K562 (cell line): ENCODE measurements at regions of chr3 and their contacts with region 1.

Region 1: GRCh38 chr3:185572183-185572582 is 13.9 kb upstream of the SENP2 start:
- DNase-seq: peak; percentile 50 to 74 (median 64)
- ATAC-seq: peak; percentile 75
- H3K4me3 ChIP-seq: no peak overlapping the region
- H3K27ac ChIP-seq: peak overlapping the region; percentile 57; the same call in 2 of the 3 replicates
- H3K4me1 ChIP-seq: peaks cover 0 to 3% of the 10 kb centered on the region in 2 experiments; a peak in 2 of 5 replicates
- H3K27me3 ChIP-seq: no peaks in the 10 kb centered on the region
- CTCF ChIP-seq: no peak
- EP300 ChIP-seq: peak; percentile 47; the same call in 1 of the 2 replicates
- POLR2A ChIP-seq: no peak
- RAD21 ChIP-seq: no peak

Region 2: GRCh38 chr3:185290266-185290665 is 281.9 kb before region 1 on chr3:
- CTCF ChIA-PET with region 1: no interaction called
- POLR2A ChIA-PET with region 1: no interaction called
- in situ Hi-C with region 1: no loop called
- intact Hi-C with region 1: no loop called
- DNase-seq: peak in 2 of 4 experiments; percentile 20 to 42
- ATAC-seq: peak; percentile 77
- H3K4me3 ChIP-seq: no peak overlapping the region
- H3K27ac ChIP-seq: peak overlapping the region; percentile 21; the same call in 1 of the 3 replicates
- H3K4me1 ChIP-seq: peaks cover 1 to 4% of the 10 kb centered on the region in 2 experiments; a peak in 3 of 5 replicates
- H3K27me3 ChIP-seq: no peaks in the 10 kb centered on the region
- CTCF ChIP-seq: peak in 2 of 3 experiments; percentile 7 to 43; a peak in 3 of 6 replicates
- EP300 ChIP-seq: no peak
- POLR2A ChIP-seq: no peak
- RAD21 ChIP-seq: peak in 1 of 2 experiments; percentile 38; a peak in 1 of 4 replicates

Region 3: GRCh38 chr3:185406121-185406620 is 166.0 kb before region 1 on chr3:
- CTCF ChIA-PET with region 1: no interaction called
- POLR2A ChIA-PET with region 1: no interaction called
- in situ Hi-C with region 1: no loop called
- intact Hi-C with region 1: no loop called
- DNase-seq: no peak
- ATAC-seq: no peak
- H3K4me3 ChIP-seq: no peak overlapping the region
- H3K27ac ChIP-seq: no peak overlapping the region
- H3K4me1 ChIP-seq: no peaks in the 10 kb centered on the region
- H3K27me3 ChIP-seq: peaks cover 10 to 14% of the 10 kb centered on the region in 2 experiments
- CTCF ChIP-seq: no peak
- EP300 ChIP-seq: no peak
- POLR2A ChIP-seq: no peak
- RAD21 ChIP-seq: no peak

Region 4: DNA sequence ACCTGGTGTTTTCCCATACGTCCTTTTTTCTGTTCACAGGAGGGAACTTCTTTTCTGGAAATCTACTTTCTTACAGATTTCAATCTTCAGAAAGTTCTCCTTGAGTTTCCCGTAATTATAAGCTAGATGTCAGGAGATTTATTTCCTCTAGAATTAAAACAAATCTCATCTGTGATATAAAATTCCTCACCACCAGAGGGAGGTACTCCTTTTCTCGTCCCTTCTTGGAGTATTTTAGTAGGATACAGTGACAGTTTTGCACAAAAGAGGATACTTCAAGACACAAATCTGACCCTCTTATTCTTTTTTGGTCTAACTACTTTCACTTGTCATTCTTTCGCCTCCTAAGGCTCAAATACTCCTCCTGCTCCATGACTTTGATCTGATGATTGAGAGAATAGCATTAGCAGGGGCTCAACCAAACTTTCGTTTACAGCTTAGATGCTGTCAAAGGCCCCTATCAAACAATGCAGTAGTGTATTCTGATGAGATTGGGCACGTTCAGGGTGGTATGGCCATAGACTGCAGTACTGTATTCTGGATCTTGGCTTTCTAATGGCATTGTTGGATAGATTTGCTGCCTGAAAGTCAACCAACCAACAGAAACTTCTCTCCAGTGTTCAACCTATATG is 111.3 kb before region 1 on chr3:
- CTCF ChIA-PET with region 1: interaction called, 6 read pairs
- POLR2A ChIA-PET with region 1: no interaction called
- in situ Hi-C with region 1: no loop called
- intact Hi-C with region 1: loop called (anchors 5 kb)
- DNase-seq: peak; percentile 44 to 55 (median 46)
- ATAC-seq: peak; percentile 76
- H3K4me3 ChIP-seq: no peak overlapping the region
- H3K27ac ChIP-seq: no peak overlapping the region
- H3K4me1 ChIP-seq: peaks cover 0 to 4% of the 10 kb centered on the region in 2 experiments; a peak in 3 of 5 replicates
- H3K27me3 ChIP-seq: no peaks in the 10 kb centered on the region; a peak in 1 of 5 replicates
- CTCF ChIP-seq: peak; percentile 42 to 73 (median 45); a peak in 4 of 6 replicates
- EP300 ChIP-seq: no peak
- POLR2A ChIP-seq: no peak
- RAD21 ChIP-seq: peak; percentile 44 to 84

Region 5: DNA sequence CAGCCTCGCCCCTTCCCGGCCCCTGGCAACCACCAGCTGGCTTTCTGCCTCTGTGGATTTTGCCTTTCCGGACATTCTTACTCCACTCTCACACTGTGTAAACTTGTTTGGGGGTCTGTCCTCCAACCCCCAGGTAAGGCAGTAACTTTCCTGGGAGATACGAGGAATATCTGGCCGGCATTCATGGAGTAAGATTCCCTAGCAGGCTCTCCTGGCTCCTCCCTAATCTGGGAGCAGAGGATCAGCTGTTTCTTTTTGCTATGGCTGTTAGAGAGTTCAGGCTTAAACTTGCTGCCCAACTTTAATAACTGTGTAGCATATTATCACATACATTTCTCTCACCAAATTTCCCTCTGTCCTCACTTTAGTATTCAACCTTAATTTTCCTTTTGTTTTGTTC is 188.4 kb after region 1 on chr3:
- CTCF ChIA-PET with region 1: no interaction called
- POLR2A ChIA-PET with region 1: no interaction called
- in situ Hi-C with region 1: no loop called
- intact Hi-C with region 1: no loop called
- DNase-seq: no peak
- ATAC-seq: no peak
- H3K4me3 ChIP-seq: no peak overlapping the region
- H3K27ac ChIP-seq: no peak overlapping the region
- H3K4me1 ChIP-seq: peaks cover 11 to 51% of the 10 kb centered on the region in 2 experiments
- H3K27me3 ChIP-seq: no peaks in the 10 kb centered on the region; a peak in 1 of 5 replicates
- CTCF ChIP-seq: no peak
- EP300 ChIP-seq: no peak
- POLR2A ChIP-seq: no peak
- RAD21 ChIP-seq: no peak